Endothelial cell of umbilical vein (primary cell): ENCODE measurements at regions of chr9 and their contacts with region 1.

Region 1: DNA sequence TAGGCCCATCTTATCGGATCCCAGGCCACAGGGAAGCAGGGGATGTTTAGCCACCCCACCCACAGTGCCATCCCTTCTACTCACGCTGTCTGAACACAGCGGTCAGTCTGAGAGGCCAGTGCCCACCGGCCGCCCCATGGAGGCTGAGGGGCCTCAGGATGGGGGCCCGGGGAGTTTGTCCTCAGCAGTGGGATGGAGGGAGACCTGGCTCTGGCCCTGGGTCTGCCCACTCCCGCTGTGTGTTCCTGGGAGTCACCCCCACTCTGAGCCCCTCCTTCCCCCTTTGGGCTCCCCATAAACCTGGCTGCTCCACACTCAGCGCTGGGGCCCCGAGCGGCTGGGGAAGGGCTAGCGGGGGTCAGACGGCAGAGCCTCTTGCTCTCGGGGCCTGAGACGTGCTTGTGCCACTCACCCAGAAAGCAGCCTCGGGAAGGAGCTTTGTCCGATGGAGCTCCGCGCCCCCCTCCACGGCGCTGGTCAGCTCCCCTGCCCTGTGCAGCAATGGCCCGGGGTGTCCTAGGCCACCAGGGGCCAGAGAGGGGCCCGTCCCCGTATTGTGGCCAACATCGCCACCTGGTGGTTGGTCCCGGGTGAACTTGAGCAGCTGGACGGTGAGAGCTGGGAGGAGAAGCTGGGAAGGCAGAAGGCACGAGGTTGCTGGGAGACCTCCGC is 10.9 kb upstream of the LAMC3 start:
- DNase-seq: peak; percentile 48
- H3K4me3 ChIP-seq: no peak overlapping the region
- H3K27ac ChIP-seq: no peak overlapping the region
- H3K4me1 ChIP-seq: no peaks in the 10 kb centered on the region
- H3K27me3 ChIP-seq: peaks cover 5 to 11% of the 10 kb centered on the region in 2 experiments
- CTCF ChIP-seq: peak; percentile 74 to 85
- POLR2A ChIP-seq: no peak

Region 2: GRCh38 chr9:130701056-130702022 is 296.7 kb before region 1 on chr9:
- CTCF ChIA-PET with region 1: interaction called, 77 read pairs
- POLR2A ChIA-PET with region 1: no interaction called
- dilution Hi-C with region 1: no loop called
- intact Hi-C with region 1: no loop called
- DNase-seq: peak; percentile 84
- H3K4me3 ChIP-seq: no peak overlapping the region
- H3K27ac ChIP-seq: no peak overlapping the region
- H3K4me1 ChIP-seq: peaks cover 2% of the 10 kb centered on the region
- H3K27me3 ChIP-seq: no peaks in the 10 kb centered on the region
- CTCF ChIP-seq: peak; percentile 97 to 99
- POLR2A ChIP-seq: no peak

Region 3: GRCh38 chr9:130866474-130866965 is 131.5 kb before region 1 on chr9:
- CTCF ChIA-PET with region 1: interaction called, 181 read pairs
- POLR2A ChIA-PET with region 1: interaction called, 5 read pairs
- dilution Hi-C with region 1: no loop called
- intact Hi-C with region 1: loop called (anchors 1 kb)
- DNase-seq: peak; percentile 84
- H3K4me3 ChIP-seq: no peak overlapping the region
- H3K27ac ChIP-seq: no peak overlapping the region
- H3K4me1 ChIP-seq: peaks cover 6% of the 10 kb centered on the region
- H3K27me3 ChIP-seq: no peaks in the 10 kb centered on the region
- CTCF ChIP-seq: peak; percentile 86 to 97
- POLR2A ChIP-seq: no peak

Region 4: DNA sequence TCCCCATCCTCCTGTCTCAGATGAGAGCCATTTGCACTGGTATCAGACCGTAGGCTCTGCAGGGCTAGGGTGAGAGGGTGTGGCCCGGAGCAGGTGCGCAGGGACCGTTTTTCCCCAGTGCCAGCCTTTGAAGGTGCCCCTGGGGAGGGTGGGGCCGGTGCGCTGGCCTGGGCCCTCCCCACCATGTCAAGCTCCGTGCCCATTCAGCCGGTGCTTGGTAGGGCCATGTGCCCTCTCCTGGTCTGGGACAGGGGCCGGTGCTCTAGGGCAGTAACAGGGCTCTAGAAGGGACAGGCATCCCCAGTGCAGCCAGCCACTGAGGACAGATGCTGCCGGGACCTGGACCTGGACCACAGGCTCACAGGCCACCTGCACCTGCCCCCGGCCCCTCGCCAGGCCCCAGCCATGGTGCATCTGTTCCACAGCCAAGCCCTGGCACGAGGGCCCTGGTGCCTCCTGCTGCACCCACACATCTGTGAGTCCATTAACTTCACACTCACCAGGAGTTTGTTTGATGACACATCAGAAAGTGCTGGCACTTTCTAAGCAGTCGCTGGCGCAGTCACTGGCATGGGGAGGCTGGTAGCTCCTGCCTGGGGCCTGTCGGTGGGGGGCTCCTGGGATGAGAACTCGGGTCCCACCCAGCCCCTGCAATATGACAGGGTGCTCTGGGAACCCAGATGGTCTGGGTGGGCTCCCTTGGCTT is 96.4 kb before region 1 on chr9:
- CTCF ChIA-PET with region 1: interaction called, 15 read pairs
- POLR2A ChIA-PET with region 1: no interaction called
- dilution Hi-C with region 1: no loop called
- intact Hi-C with region 1: no loop called
- DNase-seq: no peak
- H3K4me3 ChIP-seq: no peak overlapping the region
- H3K27ac ChIP-seq: no peak overlapping the region
- H3K4me1 ChIP-seq: no peaks in the 10 kb centered on the region
- H3K27me3 ChIP-seq: peaks cover 0 to 2% of the 10 kb centered on the region in 2 experiments
- CTCF ChIP-seq: no peak
- POLR2A ChIP-seq: no peak

Region 5: GRCh38 chr9:130940693-130941576 is 57.1 kb before region 1 on chr9:
- CTCF ChIA-PET with region 1: interaction called, 13 read pairs
- POLR2A ChIA-PET with region 1: no interaction called
- dilution Hi-C with region 1: no loop called
- intact Hi-C with region 1: loop called (anchors 2 kb)
- DNase-seq: peak; percentile 44
- H3K4me3 ChIP-seq: no peak overlapping the region
- H3K27ac ChIP-seq: no peak overlapping the region
- H3K4me1 ChIP-seq: peaks cover 3% of the 10 kb centered on the region
- H3K27me3 ChIP-seq: peaks cover 21 to 35% of the 10 kb centered on the region in 2 experiments
- CTCF ChIP-seq: peak; percentile 64 to 89
- POLR2A ChIP-seq: no peak

Region 6: DNA sequence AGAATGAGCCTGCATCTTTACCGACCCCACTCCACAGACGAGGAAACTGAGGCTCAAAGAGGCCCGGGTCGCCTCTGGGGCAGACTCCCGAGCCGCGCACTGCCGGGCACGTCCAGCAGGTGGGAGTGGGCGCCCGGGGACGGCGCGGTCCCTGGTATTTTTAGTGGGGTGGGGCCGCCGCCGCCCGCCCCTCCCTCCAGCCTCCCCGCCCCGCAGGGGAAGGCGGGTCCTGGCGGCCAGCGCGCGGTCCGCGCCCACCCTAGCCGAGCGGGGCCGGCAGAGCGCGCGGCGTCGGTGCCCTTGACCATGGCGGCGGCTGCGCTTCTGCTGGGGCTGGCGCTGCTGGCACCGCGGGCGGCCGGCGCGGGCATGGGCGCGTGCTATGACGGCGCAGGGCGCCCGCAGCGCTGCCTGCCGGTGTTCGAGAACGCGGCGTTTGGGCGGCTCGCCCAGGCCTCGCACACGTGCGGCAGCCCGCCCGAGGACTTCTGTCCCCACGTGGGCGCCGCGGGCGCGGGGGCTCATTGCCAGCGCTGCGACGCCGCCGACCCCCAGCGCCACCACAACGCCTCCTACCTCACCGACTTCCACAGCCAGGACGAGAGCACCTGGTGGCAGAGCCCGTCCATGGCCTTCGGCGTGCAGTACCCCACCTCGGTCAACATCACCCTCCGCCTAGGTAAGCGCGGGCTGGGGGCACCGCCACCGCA is 11.0 kb after region 1 on chr9 and contains the start of gene LAMC3:
- CTCF ChIA-PET with region 1: interaction called, 19 read pairs
- POLR2A ChIA-PET with region 1: no interaction called
- dilution Hi-C with region 1: no loop called
- intact Hi-C with region 1: no loop called
- DNase-seq: no peak
- H3K4me3 ChIP-seq: no peak within 1 kb of the TSS
- H3K27ac ChIP-seq: no peak within 1 kb of the TSS
- H3K4me1 ChIP-seq: no peaks in the 10 kb centered on the region
- H3K27me3 ChIP-seq: peaks cover 19 to 22% of the 10 kb centered on the region in 2 experiments
- CTCF ChIP-seq: peak; percentile 21 to 48
- POLR2A ChIP-seq: no peak
- total RNA-seq, gene LAMC3: 0.12 and 0.38 TPM in 2 replicates

Region 7: DNA sequence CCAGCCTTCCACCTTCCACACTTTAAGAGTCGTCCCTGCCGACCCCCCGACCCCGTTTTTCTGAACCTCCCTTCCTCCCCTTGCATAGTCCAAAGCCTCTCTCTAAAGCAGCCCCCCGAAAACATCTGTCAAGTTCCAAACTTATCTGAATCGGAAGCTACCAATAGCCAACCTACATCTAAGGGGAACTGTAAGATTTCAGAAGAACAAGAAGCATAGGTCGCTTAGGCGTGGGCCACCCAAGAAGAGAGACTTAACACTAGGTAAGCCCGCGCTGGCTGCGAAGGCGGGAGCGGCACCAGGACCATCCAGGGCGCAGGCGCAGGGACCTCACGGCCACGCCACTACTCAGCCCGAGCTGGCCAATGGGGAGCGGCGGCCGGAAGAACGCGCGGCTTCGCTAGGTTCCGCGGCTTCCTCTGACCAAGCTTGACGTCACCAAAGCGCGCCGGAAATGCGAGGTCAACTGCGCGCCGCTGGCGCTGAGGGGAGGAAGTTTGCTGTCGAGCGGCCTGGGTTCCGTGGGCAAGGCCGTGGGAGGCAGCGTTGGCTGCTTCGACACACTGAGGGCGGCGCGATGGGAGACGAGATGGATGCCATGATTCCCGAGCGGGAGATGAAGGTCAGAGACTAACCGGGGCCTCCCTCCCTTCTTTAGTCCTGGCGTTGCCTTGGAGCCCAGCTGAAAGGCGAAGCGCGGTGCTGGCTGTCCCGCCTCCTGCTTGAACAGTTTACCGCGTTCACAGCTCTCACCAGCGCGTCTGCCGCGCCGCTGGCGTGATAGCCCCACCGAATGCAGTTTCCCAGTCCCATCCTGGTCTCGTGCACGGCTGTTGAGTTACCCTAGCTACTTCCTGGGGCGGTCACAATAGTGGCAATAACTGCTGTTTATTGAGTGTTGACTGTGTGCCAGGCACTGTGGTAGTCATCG is 127.3 kb after region 1 on chr9 and contains the start of gene NUP214:
- CTCF ChIA-PET with region 1: no interaction called
- POLR2A ChIA-PET with region 1: no interaction called
- dilution Hi-C with region 1: no loop called
- intact Hi-C with region 1: no loop called
- DNase-seq: peak; percentile 99
- H3K4me3 ChIP-seq: peak within 1 kb of the TSS; percentile 37 to 83 (median 65)
- H3K27ac ChIP-seq: peak within 1 kb of the TSS; percentile 63
- H3K4me1 ChIP-seq: peaks cover 11% of the 10 kb centered on the region
- H3K27me3 ChIP-seq: no peaks in the 10 kb centered on the region
- CTCF ChIP-seq: no peak
- POLR2A ChIP-seq: peak; percentile 97
- total RNA-seq, gene NUP214: 58.1 and 65.9 TPM in 2 replicates

Region 8: GRCh38 chr9:131227112-131227958 is 229.3 kb after region 1 on chr9:
- CTCF ChIA-PET with region 1: no interaction called
- POLR2A ChIA-PET with region 1: no interaction called
- dilution Hi-C with region 1: no loop called
- intact Hi-C with region 1: no loop called
- DNase-seq: peak; percentile 65
- H3K4me3 ChIP-seq: no peak overlapping the region
- H3K27ac ChIP-seq: no peak overlapping the region
- H3K4me1 ChIP-seq: peaks cover 39% of the 10 kb centered on the region
- H3K27me3 ChIP-seq: no peaks in the 10 kb centered on the region
- CTCF ChIP-seq: no peak
- POLR2A ChIP-seq: no peak

Region 9: GRCh38 chr9:131334629-131335367 is 336.7 kb after region 1 on chr9:
- CTCF ChIA-PET with region 1: no interaction called
- POLR2A ChIA-PET with region 1: no interaction called
- dilution Hi-C with region 1: no loop called
- intact Hi-C with region 1: no loop called
- DNase-seq: peak; percentile 48
- H3K4me3 ChIP-seq: no peak overlapping the region
- H3K27ac ChIP-seq: no peak overlapping the region
- H3K4me1 ChIP-seq: peaks cover 12% of the 10 kb centered on the region
- H3K27me3 ChIP-seq: no peaks in the 10 kb centered on the region
- CTCF ChIP-seq: no peak
- POLR2A ChIP-seq: no peak